ENCODE measurements at regions of chr16 and their contacts with region 1.

Region 1: GRCh38 chr16:57576429-57576870 is 34.0 kb downstream of the ADGRG5 start:
- DNase-seq: peak; percentile 74
- ATAC-seq: peak; percentile 98
- H3K4me3 Mint-ChIP-seq: no peak overlapping the region
- H3K27ac Mint-ChIP-seq: peak overlapping the region; percentile 35
- H3K4me1 Mint-ChIP-seq: peaks cover 12% of the 10 kb centered on the region
- H3K27me3 Mint-ChIP-seq: no peaks in the 10 kb centered on the region
- CTCF ChIP-seq: peak; percentile 80

Region 2: DNA sequence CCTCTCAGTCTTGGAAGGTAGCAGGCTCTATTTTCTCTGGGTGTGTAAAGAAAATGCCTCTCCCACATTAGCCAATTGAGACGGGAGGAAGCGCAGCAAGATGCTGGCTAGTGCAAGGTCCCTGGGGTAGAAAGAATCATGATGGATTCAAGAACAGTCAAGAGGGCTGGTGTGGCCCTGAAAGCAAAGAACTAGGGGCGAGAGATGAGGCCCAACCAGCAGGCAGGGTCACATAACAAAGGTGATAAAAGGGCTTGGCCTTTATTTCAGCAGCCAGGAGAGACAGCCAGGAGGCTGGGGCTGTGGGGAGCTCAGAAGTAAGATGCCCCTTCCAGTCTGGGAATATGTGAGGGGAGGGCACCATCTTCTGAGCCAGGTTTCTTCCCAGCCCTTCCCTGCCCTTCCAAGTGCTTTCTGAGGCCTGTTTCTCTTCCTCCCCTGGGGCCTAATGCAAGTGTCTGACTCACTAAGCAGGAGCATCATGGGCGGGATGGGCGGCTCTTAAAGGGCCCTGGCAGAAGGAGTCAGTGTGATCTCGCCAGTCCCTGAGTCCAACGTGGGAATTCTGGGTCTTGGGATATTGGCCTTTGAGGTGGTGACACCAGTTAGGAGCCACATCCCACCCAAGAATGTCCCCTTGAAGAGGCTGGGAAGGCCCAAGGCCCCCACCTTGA is 591.0 kb before region 1 on chr16:
- CTCF ChIA-PET with region 1: no interaction called
- POLR2A ChIA-PET with region 1: no interaction called
- intact Hi-C with region 1: no loop called
- DNase-seq: peak; percentile 20
- ATAC-seq: no peak
- H3K4me3 Mint-ChIP-seq: peak overlapping the region; percentile 7
- H3K27ac Mint-ChIP-seq: peak overlapping the region; percentile 74
- H3K4me1 Mint-ChIP-seq: peaks cover 91% of the 10 kb centered on the region
- H3K27me3 Mint-ChIP-seq: no peaks in the 10 kb centered on the region
- CTCF ChIP-seq: no peak

Region 3: DNA sequence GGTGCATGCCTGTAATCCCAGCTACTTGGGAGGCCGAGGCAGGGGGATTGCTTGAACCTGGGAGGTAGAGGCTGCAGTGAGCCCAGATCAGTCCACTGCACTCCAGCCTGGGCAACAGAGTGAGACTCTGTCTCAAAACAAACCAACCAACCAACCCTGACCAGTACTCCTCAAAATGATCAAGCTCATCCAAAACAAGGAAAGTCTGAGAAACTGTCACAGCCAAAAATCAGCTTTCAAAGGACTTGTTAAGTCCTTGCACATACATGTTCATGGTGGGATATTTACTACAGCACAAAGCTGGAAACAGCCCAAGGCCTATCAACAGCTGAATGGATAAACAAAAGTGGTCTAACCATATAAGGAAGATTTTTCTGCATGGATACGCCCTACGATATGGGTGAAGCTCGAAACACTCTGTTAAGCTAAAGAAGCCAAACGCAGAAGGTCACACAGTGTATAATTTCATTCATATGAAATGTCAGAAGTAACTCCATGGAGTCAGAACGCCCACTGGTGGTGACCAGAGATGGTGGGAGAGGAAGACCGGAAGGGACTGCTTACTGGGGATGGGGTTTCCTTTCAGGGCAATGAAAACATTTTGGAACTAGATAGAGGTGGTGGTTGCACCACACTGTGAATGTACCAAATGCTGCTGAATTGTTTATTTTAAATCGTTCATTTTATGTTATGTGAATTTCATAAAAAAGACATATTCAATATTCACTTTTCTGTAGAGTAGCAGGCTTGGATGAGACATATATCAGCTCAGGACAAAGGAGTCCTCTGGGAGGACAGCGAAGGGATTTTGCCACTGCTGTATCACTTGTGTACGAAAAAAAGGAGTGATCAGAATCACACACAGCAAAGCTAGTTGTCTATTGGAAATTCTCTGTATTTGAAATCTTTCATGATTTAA is 154.2 kb before region 1 on chr16:
- CTCF ChIA-PET with region 1: interaction called, 6 read pairs
- POLR2A ChIA-PET with region 1: no interaction called
- intact Hi-C with region 1: loop called (anchors 2 kb)
- DNase-seq: no peak
- ATAC-seq: peak; percentile 29
- H3K4me3 Mint-ChIP-seq: no peak overlapping the region
- H3K27ac Mint-ChIP-seq: no peak overlapping the region
- H3K4me1 Mint-ChIP-seq: peaks cover 14% of the 10 kb centered on the region
- H3K27me3 Mint-ChIP-seq: no peaks in the 10 kb centered on the region
- CTCF ChIP-seq: no peak

Region 4: DNA sequence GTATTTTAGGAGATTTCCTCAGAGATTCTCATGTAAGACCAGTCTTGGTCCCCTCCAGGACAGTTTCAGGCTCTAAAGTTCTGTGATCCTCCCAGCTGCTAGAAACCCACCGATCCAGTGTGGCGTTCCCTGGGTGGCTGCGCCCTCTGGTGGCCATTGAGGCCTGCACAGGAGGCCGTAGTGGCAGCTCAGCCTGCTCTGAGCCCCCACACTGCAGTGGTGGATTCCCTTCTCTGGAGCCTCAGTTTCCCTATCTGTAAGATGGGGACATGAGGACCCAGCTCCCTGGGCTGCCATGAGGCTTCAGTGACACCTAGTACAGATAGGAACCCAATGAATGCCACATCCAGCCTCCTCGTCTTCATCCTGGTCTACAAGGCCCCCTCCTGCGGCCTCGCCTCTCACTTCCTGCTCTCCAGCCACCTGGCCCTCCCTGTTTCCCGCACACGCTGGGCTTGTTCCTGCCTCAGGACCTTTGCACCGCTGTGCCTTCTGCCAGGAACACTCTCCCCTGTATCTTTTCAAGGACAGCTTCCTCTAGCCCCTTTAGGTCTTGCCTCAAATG is 56.6 kb before region 1 on chr16:
- CTCF ChIA-PET with region 1: interaction called, 49 read pairs
- POLR2A ChIA-PET with region 1: interaction called, 3 read pairs
- intact Hi-C with region 1: loop called (anchors 1 kb)
- DNase-seq: peak; percentile 68
- ATAC-seq: peak; percentile 80
- H3K4me3 Mint-ChIP-seq: no peak overlapping the region
- H3K27ac Mint-ChIP-seq: no peak overlapping the region
- H3K4me1 Mint-ChIP-seq: peaks cover 40% of the 10 kb centered on the region
- H3K27me3 Mint-ChIP-seq: no peaks in the 10 kb centered on the region
- CTCF ChIP-seq: peak; percentile 96

Region 5: DNA sequence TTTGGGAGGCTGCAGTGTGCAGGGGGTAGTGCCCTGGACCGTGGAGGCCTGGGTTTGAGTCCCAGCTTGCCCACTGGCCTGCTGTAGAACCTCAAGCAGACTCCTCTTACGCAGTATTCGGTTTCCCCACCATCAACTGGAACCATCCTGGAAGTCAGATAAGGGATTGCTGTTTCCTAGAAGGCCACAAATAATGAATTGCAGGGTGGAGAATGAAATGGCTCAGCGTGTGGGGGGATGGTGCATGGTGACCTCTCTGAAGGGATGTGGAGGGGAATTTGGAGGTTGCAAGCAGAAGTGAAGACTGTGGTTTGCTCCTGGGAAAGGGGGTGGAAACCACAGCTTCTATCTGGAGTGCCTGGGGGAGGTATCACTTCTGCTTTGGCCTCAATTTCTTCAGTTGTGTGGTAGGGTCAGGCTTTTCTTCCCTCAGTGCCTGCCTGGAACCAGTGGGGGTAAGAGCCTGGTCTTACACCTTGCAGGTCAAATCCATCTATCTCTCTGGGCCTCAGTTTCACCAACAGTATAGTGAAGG is 32.3 kb before region 1 on chr16:
- CTCF ChIA-PET with region 1: interaction called, 13 read pairs
- POLR2A ChIA-PET with region 1: interaction called, 6 read pairs
- intact Hi-C with region 1: loop called (anchors 1 kb)
- DNase-seq: peak; percentile 64
- ATAC-seq: peak; percentile 79
- H3K4me3 Mint-ChIP-seq: peak overlapping the region; percentile 88
- H3K27ac Mint-ChIP-seq: peak overlapping the region; percentile 79
- H3K4me1 Mint-ChIP-seq: peaks cover 87% of the 10 kb centered on the region
- H3K27me3 Mint-ChIP-seq: no peaks in the 10 kb centered on the region
- CTCF ChIP-seq: no peak

Region 6: DNA sequence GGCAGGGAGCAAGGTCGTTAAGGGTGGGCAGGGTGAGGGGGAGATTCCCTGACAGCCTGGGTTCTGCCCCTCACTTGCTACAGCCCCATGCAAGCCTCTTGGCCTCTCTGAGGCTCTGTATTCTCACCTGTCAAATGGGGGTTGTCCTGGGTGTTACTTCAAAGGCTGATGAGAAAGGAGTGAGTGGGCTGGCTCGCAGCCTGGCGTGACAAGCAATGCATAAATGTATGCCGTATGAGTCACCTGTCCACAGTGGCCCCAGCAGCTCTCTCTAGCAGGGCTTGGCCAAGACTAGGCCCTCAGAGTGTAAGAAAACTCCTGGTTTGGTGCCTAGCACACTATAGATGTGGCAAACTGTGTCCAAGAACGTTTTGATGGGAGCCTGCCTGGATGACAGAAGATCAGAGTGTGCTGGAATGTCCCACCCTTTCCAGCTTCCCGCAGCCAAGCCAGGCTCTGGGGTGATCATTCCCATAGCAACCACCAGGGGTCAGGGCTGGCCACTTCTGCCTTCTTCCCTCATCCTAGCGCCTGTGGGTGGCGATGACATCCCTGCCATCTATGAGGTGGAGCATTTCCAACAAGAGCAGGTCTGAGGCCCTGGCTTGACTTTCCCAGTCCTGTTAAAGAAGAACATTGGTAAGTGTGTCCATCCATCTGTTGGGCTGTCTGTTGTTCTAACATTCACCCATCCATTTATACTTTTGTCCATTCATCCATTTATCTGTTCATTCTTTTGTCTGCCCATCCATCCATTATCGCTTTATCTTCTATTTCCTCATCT is 14.8 kb after region 1 on chr16:
- CTCF ChIA-PET with region 1: interaction called, 3 read pairs
- POLR2A ChIA-PET with region 1: no interaction called
- intact Hi-C with region 1: loop called (anchors 2 kb)
- DNase-seq: no peak
- ATAC-seq: peak; percentile 90
- H3K4me3 Mint-ChIP-seq: no peak overlapping the region
- H3K27ac Mint-ChIP-seq: no peak overlapping the region
- H3K4me1 Mint-ChIP-seq: peaks cover 21% of the 10 kb centered on the region
- H3K27me3 Mint-ChIP-seq: peaks cover 11% of the 10 kb centered on the region
- CTCF ChIP-seq: no peak

Region 7: DNA sequence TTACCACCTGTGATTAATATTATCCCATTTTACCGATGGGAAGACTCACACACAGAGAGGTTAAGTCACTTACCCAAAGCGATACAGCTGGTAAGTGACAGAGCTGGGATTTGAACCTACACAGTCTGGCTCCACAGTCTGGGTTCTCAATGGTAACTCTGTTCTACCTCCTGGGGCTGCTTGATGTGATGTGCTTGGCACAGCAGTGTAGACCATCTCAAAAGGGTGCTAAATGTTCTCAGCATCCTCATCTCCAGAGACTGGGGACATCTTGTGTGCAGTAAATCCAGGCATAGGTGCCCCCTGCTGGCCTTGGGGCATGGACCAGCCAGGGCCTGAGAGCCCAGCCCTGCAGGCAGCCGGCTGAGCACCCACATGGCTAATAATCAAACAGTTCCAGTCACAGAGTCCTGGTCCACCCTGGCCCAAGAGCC is 143.7 kb after region 1 on chr16:
- CTCF ChIA-PET with region 1: no interaction called
- POLR2A ChIA-PET with region 1: no interaction called
- intact Hi-C with region 1: loop called (anchors 1 kb)
- DNase-seq: no peak
- ATAC-seq: peak; percentile 57
- H3K4me3 Mint-ChIP-seq: no peak overlapping the region
- H3K27ac Mint-ChIP-seq: no peak overlapping the region
- H3K4me1 Mint-ChIP-seq: peaks cover 3% of the 10 kb centered on the region
- H3K27me3 Mint-ChIP-seq: peaks cover 11% of the 10 kb centered on the region
- CTCF ChIP-seq: no peak

Region 8: GRCh38 chr16:57899771-57900661 is 323.6 kb after region 1 on chr16:
- CTCF ChIA-PET with region 1: no interaction called
- POLR2A ChIA-PET with region 1: no interaction called
- intact Hi-C with region 1: loop called (anchors 1 kb)
- DNase-seq: peak; percentile 48
- ATAC-seq: peak; percentile 68
- H3K4me3 Mint-ChIP-seq: no peak overlapping the region
- H3K27ac Mint-ChIP-seq: no peak overlapping the region
- H3K4me1 Mint-ChIP-seq: no peaks in the 10 kb centered on the region
- H3K27me3 Mint-ChIP-seq: peaks cover 23% of the 10 kb centered on the region
- CTCF ChIP-seq: no peak